ENCODE measurements at regions of chr6 and their contacts with region 1.

Region 1: DNA sequence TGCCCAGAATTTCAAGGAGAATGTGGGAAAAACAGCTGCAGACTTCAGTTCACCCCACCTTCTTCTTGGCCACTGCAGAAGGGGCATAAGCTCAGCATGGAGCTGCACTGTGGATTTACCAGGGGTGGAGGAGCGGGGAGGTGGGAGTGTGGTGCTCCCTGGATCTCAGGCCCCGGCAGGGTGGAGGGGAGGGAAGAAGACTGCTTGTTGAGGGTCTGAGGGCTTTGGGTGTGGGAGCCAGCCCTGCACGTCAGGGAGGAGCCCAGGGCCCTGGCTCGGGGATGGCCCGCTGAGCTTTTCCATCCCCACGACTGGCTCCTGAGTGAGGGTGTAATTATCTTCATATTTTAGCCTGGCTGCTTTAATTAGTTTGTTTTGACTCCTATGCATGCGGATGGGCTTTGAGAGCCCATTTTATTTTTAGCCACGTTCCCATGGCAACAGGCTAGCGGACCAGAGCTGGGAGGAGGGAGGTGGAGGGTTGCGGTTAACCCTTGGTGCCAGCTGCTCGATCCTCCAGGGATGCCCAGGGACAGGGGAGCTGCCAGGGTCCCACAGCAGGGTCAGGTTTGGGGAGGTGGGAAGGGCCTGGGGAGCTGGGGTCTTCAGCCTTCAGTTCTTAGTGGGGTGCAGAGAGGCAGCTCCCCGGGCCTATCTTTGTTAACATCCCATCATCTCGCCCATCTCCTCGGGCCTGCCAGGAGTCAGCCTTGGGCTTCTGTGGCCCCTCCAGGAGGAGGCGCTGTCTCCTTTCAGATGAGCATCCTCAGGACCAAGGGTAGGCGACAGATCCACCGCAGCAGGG is 68.2 kb downstream of the RAB44 start:
- DNase-seq: peak; percentile 91
- ATAC-seq: peak; percentile 75

Region 2: GRCh38 chr6:36533321-36533720 is 232.5 kb before region 1 on chr6:
- intact Hi-C with region 1: no loop called
- DNase-seq: no peak
- ATAC-seq: no peak

Region 3: DNA sequence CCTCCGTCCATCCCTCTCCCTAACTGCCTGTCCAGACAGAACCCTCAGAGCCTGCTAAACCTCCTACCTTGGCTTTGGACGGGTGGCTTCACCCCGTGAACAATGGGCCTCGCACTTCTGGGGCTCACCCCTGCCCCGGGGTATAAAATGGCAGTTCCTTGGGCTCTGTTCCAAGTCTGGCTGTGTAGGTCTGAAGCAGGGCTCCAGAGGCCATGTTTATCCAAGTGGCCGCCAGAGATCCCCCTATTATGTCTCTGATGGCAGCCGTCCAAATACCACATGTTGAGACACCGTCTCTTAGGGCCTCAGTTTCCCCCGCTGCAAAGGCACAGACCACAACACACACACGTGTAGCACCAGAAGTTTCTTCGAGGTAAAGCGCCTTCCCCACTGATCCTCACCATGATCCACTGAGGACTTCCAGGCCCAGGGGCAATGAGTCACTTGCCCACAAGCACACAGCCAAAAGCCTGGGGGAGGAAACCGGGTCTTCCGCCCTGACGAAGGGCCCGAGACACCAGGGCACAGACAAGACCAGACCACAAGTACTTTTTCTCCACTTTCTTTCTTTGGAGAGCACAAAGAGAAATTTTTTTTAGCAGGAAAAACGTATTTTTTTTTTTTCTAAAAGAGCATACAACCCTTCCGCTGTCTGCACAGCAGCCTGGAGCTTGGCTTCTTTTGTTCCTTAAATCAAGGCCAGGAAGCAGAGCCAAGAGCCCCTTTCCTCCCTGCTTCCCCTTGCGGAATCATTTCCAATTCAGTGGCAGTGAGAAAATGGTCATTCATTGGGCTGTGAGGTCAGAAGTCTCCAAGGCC is 61.7 kb after region 1 on chr6:
- intact Hi-C with region 1: loop called (anchors 5 kb)
- DNase-seq: no peak
- ATAC-seq: no peak

Region 4: GRCh38 chr6:36851149-36851614 is 85.4 kb after region 1 on chr6:
- intact Hi-C with region 1: loop called (anchors 1 kb)
- DNase-seq: no peak
- ATAC-seq: peak; percentile 30

Region 5: GRCh38 chr6:36979347-36979742 is 213.5 kb after region 1 on chr6:
- intact Hi-C with region 1: loop called (anchors 2 kb)
- DNase-seq: no peak
- ATAC-seq: peak; percentile 72

Region 6: GRCh38 chr6:37018198-37019064 is 252.6 kb after region 1 on chr6:
- intact Hi-C with region 1: loop called (anchors 2 kb)
- DNase-seq: peak; percentile 92
- ATAC-seq: peak; percentile 97

Region 7: DNA sequence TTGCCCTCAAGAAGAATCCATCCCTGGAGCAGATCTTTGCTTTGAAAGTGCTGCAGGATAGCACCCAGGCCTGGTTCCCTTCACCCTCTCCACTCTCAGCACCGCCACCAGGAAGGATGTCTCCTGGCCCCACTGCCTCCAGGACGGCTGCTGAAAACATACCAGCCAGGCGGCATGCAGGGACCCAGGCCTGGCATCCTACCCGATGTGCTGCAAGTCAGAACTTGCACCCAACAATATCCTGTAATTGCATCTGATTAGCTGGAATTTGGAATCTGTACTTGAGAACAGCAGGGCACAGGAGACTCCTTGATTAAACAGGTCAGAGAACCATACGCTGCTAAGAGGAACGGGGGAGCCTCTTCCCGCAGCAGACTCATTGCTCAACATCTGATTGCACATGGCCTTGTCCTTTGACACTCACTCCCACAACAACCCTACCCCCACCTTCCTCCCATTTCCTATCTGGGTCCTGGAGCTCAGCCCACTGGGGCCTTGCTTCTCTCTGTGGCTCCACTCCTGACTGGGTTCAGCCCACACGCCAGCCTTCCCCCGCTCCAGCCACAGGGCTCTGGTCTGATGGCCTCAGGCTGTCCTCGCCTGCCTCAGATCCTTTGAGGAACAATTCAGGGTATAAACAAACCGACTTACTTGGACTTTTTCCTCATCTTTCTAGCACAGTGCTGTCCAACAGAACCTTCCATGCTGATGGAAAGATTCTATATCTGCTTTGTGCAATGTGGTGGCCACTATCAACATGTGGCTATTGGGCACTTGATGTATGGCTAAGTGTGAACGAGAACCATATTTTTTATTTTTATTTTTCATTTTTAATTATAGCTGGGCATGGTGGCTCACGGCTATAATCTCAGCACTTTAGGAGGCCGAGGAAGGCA is 317.7 kb after region 1 on chr6:
- intact Hi-C with region 1: no loop called
- DNase-seq: peak; percentile 91
- ATAC-seq: peak; percentile 95

Region 8: DNA sequence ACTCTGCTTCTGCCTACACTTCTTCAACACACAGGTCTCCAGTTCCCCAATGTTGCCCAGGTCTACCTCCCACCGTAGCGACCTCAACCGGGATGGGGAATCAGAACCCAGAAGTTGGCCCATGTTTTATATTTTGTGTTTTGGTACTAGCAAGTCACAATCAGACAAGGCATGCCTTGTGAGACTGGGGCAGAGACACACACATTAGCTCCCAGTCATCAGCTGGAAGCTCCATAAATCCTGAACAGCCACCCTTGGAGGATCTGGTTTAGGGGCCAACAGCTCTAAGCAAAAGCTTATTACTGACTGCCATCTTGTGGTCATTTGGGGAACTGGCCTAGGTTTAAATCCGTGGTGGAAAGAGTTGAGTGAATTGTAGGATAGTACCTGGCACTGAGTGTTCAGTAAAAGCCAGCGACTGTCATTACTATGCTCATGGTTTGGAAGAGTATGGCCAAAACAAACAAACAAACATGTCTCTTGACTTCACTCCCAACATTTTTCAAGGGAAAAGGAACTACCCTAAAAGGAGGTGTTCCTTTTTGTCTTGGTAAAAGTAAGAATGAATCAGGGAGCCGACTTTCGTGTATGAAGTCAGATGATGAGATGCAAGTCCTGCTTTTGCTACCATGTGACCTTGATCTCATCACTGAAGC is 444.6 kb after region 1 on chr6:
- intact Hi-C with region 1: loop called (anchors 10 kb)
- DNase-seq: no peak
- ATAC-seq: peak; percentile 83

Measured in Right ventricle myocardium inferior (tissue), 1 donor.